ENCODE measurements at regions of chr15 and their contacts with region 1.

Region 1: GRCh38 chr15:89017370-89018066 is 70.7 kb upstream of the ABHD2 start:
- DNase-seq: no peak
- H3K4me3 ChIP-seq: peak overlapping the region in 3 of 4 donors; percentile 28 to 58 (median 34)
- H3K27ac ChIP-seq: peak overlapping the region; percentile 63 to 85 (median 81)
- H3K4me1 ChIP-seq: peaks cover 18 to 59% (median 36%) of the 10 kb centered on the region in 3 donors
- H3K27me3 ChIP-seq: no peaks in the 10 kb centered on the region
- CTCF ChIP-seq: peak; percentile 34 to 87 (median 78)
- POLR2A ChIP-seq: no peak

Region 2: GRCh38 chr15:88904624-88905327 is 112.7 kb before region 1 on chr15:
- intact Hi-C with region 1: loop called (anchors 5 kb)
- DNase-seq: peak; percentile 19
- H3K4me3 ChIP-seq: no peak overlapping the region
- H3K27ac ChIP-seq: peak overlapping the region in 3 of 4 donors; percentile 33 to 48 (median 39)
- H3K4me1 ChIP-seq: peaks cover 3 to 41% (median 24%) of the 10 kb centered on the region in 3 donors
- H3K27me3 ChIP-seq: no peaks in the 10 kb centered on the region
- CTCF ChIP-seq: peak; percentile 97 to 99 (median 98)
- POLR2A ChIP-seq: no peak

Region 3: GRCh38 chr15:89068325-89068784 is 50.8 kb after region 1 on chr15:
- intact Hi-C with region 1: no loop called
- DNase-seq: no peak
- H3K4me3 ChIP-seq: no peak overlapping the region
- H3K27ac ChIP-seq: peak overlapping the region in 3 of 4 donors; percentile 28 to 55 (median 28)
- H3K4me1 ChIP-seq: peaks cover 0 to 24% (median 16%) of the 10 kb centered on the region in 3 donors
- H3K27me3 ChIP-seq: no peaks in the 10 kb centered on the region
- CTCF ChIP-seq: no peak
- POLR2A ChIP-seq: no peak